ENCODE measurements at regions of chr5 and their contacts with region 1.

Region 1: GRCh38 chr5:134794082-134794481 is 35.5 kb downstream of the DDX46 start:
- DNase-seq: peak; percentile 2
- H3K4me3 ChIP-seq: no peak overlapping the region
- H3K27ac ChIP-seq: no peak overlapping the region
- H3K4me1 ChIP-seq: no peaks in the 10 kb centered on the region
- H3K27me3 ChIP-seq: no peaks in the 10 kb centered on the region
- CTCF ChIP-seq: no peak

Region 2: GRCh38 chr5:134692722-134693121 is 101.4 kb before region 1 on chr5:
- CTCF ChIA-PET with region 1: no interaction called
- dilution Hi-C with region 1: no loop called
- in situ Hi-C with region 1: no loop called
- intact Hi-C with region 1: loop called (anchors 10 kb)
- DNase-seq: no peak
- H3K4me3 ChIP-seq: no peak overlapping the region
- H3K27ac ChIP-seq: no peak overlapping the region
- H3K4me1 ChIP-seq: peaks cover 13% of the 10 kb centered on the region
- H3K27me3 ChIP-seq: no peaks in the 10 kb centered on the region
- CTCF ChIP-seq: no peak

Region 3: GRCh38 chr5:134851307-134851923 is 57.3 kb after region 1 on chr5:
- CTCF ChIA-PET with region 1: no interaction called
- dilution Hi-C with region 1: no loop called
- in situ Hi-C with region 1: no loop called
- intact Hi-C with region 1: loop called (anchors 5 kb)
- DNase-seq: peak; percentile 37
- H3K4me3 ChIP-seq: no peak overlapping the region
- H3K27ac ChIP-seq: no peak overlapping the region
- H3K4me1 ChIP-seq: peaks cover 4% of the 10 kb centered on the region
- H3K27me3 ChIP-seq: no peaks in the 10 kb centered on the region
- CTCF ChIP-seq: peak; percentile 45 to 74

Region 4: GRCh38 chr5:135094339-135095051 is 300.4 kb after region 1 on chr5:
- CTCF ChIA-PET with region 1: interaction called, 22 read pairs
- dilution Hi-C with region 1: no loop called
- in situ Hi-C with region 1: no loop called
- intact Hi-C with region 1: no loop called
- DNase-seq: no peak
- H3K4me3 ChIP-seq: no peak overlapping the region
- H3K27ac ChIP-seq: no peak overlapping the region
- H3K4me1 ChIP-seq: no peaks in the 10 kb centered on the region
- H3K27me3 ChIP-seq: no peaks in the 10 kb centered on the region
- CTCF ChIP-seq: no peak